Activated T-helper 1 cell treated with anti-CD3 and anti-CD28 coated beads, Interleukin-12 subunit alpha, Interleukin-12 subunit beta, Interleukin-2, Interleukin-4 antibody, amounts not matched to agents 30 ng/mL and 10 ng/mL and 1 ng/mL, durations not matched to agents 14 hours and 24 hours and 36 hours (primary cell): ENCODE measurements at regions of chr4 and their contacts with region 1.

Region 1: DNA sequence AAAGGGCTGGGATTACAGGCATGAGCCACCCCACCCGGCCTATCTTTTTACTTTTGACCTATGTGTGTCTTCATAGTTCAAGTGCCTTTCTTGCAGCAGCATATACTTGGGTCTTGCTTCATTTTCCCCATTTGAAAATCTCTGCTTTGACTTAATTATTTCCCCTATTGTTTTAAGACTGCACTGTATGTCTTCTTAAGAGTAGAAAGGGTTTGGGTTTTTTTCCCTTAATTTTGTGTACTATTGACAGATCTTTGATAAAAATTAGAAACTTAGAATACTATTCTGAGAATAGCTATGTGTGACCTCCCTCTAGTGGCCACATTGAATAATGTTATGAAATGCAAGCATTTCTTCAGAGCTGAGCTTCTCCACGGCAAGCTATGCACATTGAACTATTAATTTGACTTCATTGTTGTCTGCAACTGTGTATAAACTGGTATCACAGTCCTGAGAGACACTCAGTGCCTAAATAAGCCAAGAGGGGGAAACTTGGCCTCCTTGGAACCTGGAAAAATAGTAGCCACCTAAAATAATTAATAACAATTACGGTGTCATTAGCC is 8.7 kb upstream of the SLC25A4 start:
- DNase-seq: no peak
- H3K4me3 Mint-ChIP-seq: no peak overlapping the region
- H3K27ac Mint-ChIP-seq: no peak overlapping the region
- H3K4me1 Mint-ChIP-seq: no peaks in the 10 kb centered on the region
- H3K27me3 Mint-ChIP-seq: peaks cover 52% of the 10 kb centered on the region

Region 2: DNA sequence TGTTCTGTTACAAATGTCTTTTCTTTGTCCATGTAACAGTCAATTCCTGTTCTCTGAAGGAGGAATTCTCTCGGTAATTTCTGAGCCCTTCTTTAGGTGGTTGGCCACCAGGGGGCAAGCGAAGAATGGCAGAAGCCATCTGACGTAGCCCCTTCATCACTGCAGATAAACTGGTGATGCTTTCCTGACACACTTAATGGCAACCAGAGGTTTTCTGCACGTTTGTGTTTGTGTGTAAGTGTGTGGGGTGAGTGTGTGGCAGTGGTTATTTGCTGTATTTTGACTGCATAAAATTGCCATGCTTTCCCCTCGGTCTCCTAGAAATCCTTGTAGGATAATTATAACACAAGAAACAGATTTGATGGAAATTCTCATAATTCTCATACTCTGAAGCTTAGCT is 1294.1 kb before region 1 on chr4:
- intact Hi-C with region 1: loop called (anchors 1 kb)
- DNase-seq: peak; percentile 37
- H3K4me3 Mint-ChIP-seq: no peak overlapping the region
- H3K27ac Mint-ChIP-seq: no peak overlapping the region
- H3K4me1 Mint-ChIP-seq: peaks cover 6% of the 10 kb centered on the region
- H3K27me3 Mint-ChIP-seq: peaks cover 8% of the 10 kb centered on the region

Region 3: DNA sequence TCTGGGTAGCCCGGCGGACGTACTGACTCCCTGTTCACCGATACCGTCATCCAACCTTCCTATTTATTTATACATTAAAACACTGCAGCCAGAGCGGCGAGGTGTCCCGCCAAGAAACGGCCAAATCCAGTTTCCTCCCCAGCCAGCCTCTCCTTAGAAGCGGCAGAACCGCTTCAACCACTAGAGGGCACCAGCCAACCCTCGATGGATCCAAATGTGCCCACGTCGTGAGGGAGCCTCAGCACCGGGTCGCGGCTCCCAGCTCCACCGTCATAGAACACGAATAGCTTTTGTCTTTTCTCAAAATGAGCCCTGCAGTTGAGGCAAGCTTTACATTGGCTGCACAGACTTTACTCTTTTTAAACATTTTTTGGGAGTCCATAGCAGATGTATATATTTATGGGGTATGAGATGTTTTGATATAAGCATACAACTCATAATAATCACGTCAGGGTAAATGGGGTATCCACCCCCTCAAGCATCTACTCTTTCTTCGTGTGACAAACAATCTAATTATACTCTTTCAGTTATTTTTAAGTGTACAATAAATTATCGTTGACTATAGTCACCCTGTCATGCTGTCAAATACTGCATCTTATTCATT is 129.1 kb before region 1 on chr4:
- intact Hi-C with region 1: loop called (anchors 1 kb)
- DNase-seq: peak; percentile 69
- H3K4me3 Mint-ChIP-seq: peak overlapping the region; percentile 46
- H3K27ac Mint-ChIP-seq: no peak overlapping the region
- H3K4me1 Mint-ChIP-seq: peaks cover 9% of the 10 kb centered on the region
- H3K27me3 Mint-ChIP-seq: peaks cover 42% of the 10 kb centered on the region

Region 4: GRCh38 chr4:185039508-185040273 is 94.7 kb before region 1 on chr4:
- intact Hi-C with region 1: loop called (anchors 1 kb)
- DNase-seq: peak; percentile 28
- H3K4me3 Mint-ChIP-seq: no peak overlapping the region
- H3K27ac Mint-ChIP-seq: no peak overlapping the region
- H3K4me1 Mint-ChIP-seq: peaks cover 7% of the 10 kb centered on the region
- H3K27me3 Mint-ChIP-seq: peaks cover 27% of the 10 kb centered on the region

Region 5: GRCh38 chr4:185183619-185184281 is 49.4 kb after region 1 on chr4:
- intact Hi-C with region 1: loop called (anchors 1 kb)
- DNase-seq: peak; percentile 53
- H3K4me3 Mint-ChIP-seq: no peak overlapping the region
- H3K27ac Mint-ChIP-seq: no peak overlapping the region
- H3K4me1 Mint-ChIP-seq: peaks cover 24% of the 10 kb centered on the region
- H3K27me3 Mint-ChIP-seq: no peaks in the 10 kb centered on the region

Region 6: DNA sequence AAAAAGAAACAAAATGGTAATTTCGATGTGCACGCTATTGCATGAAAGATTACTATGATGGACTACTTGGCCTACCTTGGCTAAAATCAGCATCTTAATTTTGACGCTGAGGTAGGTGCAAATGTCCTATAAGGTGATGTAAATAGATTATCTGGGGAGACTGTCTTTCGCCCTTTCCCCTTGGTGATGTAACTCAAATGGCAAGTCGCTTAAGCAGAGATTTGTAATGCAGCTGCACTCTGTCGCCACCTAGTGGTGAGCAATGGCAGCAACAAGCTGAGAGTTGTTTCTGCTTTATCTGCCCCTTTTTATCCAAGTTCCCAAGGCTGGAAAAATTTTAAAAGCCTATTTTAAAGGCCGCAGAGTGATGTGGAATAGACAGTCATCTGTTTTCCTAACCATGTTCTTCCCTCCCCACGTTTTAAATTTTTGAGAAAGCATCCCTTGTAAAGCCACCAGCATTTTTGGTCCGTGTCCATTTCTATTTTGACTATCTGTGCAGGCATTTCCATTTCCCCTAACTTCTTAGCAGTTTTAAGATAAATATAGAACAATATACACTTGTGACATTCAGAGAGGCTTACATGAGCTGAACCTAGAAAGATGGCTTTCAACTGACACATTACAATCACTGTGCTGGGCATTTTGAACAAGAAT is 463.3 kb after region 1 on chr4:
- intact Hi-C with region 1: loop called (anchors 2 kb)
- DNase-seq: peak; percentile 32
- H3K4me3 Mint-ChIP-seq: no peak overlapping the region
- H3K27ac Mint-ChIP-seq: no peak overlapping the region
- H3K4me1 Mint-ChIP-seq: no peaks in the 10 kb centered on the region
- H3K27me3 Mint-ChIP-seq: peaks cover 13% of the 10 kb centered on the region